Activated CD4-positive, alpha-beta T cell treated with anti-CD3 and anti-CD28 coated beads for 36 hours (primary cell): ENCODE measurements at regions of chr5 and their contacts with region 1.

Region 1: DNA sequence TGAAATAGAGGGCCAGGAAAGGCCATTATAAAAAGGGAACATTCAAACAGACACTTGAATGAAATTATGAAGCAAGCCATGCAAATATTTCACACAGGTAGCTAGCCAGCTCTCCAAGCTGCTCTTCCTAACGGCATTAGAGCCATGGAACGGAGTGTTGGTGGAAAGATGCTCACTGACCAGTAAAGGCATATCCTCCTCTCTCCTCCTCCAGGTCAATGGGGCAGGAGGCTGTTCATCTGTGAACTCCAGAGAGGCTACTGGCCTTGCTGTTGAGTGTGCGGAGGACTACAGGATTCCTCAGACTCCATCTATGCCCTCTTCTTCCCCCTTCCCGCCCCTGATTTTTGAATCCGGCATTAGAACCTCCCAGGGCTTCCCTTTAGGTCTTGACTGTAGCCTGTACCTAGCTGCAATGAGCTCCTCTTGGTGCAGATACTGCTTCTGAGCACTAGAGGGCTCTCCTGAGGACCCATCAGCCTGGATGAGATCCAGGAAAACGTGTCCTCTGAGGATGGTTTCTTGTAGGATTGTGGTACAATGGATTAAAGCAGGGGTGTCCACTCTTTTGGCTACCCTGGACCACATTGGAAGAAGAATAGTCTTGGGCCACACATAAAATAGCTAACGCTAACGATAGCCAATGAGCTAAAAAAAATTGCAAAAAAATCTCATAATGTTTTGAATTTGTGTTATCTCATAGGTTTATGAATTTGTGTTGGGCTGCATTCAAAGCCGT is 162.2 kb downstream of the SREK1 start:
- DNase-seq: peak; percentile 45
- ATAC-seq: peak; percentile 73
- H3K4me3 Mint-ChIP-seq: no peak overlapping the region
- H3K27ac Mint-ChIP-seq: no peak overlapping the region
- H3K4me1 Mint-ChIP-seq: peaks cover 2% of the 10 kb centered on the region
- H3K27me3 Mint-ChIP-seq: peaks cover 8% of the 10 kb centered on the region

Region 2: GRCh38 chr5:66324357-66324756 is 18.1 kb after region 1 on chr5:
- CTCF ChIA-PET with region 1: interaction called, 39 read pairs
- POLR2A ChIA-PET with region 1: no interaction called
- intact Hi-C with region 1: no loop called
- DNase-seq: no peak
- ATAC-seq: no peak
- H3K4me3 Mint-ChIP-seq: no peak overlapping the region
- H3K27ac Mint-ChIP-seq: no peak overlapping the region
- H3K4me1 Mint-ChIP-seq: peaks cover 11% of the 10 kb centered on the region
- H3K27me3 Mint-ChIP-seq: peaks cover 3% of the 10 kb centered on the region

Region 3: DNA sequence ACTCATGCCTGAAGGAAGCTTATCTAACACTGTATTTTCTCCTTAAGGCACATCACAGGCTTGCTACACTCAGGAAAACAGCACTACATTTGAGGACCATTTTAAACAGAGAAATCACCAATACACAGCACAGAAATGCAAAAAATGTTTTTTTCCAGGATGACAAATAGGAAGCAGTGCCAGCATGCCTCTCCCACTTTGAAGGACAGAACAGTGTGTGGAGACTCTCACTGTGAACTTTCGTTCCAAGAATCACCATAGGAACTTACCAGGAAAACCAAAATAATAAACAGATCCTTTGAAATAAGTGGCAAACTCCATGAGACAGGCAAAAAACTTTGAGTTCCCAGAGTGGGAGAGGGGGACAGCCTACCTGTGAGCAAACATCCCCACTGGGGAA is 72.1 kb after region 1 on chr5:
- CTCF ChIA-PET with region 1: interaction called, 4 read pairs
- POLR2A ChIA-PET with region 1: no interaction called
- intact Hi-C with region 1: loop called in 1 of 2 experiments (anchors 5 kb)
- DNase-seq: no peak
- ATAC-seq: no peak
- H3K4me3 Mint-ChIP-seq: no peak overlapping the region
- H3K27ac Mint-ChIP-seq: no peak overlapping the region
- H3K4me1 Mint-ChIP-seq: no peaks in the 10 kb centered on the region
- H3K27me3 Mint-ChIP-seq: peaks cover 8% of the 10 kb centered on the region

Region 4: DNA sequence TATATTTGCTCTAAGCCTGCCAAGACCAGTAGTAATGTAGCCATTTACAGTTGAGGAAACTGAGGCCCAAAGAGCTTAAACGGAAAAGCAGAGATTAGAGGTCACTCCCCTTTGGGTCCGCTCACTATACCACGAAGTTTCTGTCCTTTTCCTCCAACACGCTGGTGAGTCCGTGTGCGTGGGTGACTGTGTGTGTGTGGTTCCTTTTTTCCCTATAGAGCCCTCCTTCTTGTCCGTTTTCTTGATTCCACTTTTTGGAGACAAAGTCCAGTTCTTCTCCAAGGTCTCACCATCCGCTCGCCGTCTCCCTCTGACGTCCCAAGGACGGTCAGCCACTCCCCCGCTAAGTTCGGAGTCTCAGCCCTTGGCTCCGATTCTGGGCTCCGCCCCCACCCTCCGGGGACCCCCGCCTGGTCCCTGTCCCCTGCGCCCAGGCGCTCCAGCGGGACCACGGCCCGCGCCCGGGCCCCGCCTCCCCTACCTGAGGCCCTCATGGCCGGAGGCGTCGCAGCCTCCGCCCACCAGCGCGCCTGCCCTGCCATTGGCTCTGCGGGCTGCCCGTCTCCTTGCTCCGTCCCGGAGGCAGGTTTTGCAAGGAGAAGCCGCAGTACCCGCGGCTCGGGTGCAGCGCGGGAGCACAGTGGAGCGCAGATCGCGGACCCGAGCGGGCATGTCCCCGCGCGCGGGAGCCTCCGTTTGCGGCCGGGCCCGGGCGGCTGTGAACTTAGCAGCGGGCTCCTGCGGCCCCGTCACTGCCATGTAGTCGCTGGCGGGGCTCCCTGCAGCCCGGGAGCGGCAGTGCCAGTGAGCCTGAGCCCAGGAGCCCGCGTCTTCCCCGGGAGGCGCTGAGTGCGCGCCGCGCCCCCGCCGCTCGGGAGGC is 289.7 kb after region 1 on chr5 and contains the start of gene MAST4:
- CTCF ChIA-PET with region 1: interaction called, 4 read pairs
- POLR2A ChIA-PET with region 1: no interaction called
- intact Hi-C with region 1: loop called in 1 of 2 experiments (anchors 5 kb)
- DNase-seq: peak; percentile 86
- ATAC-seq: peak; percentile 97
- H3K4me3 Mint-ChIP-seq: peak within 1 kb of the TSS; percentile 69
- H3K27ac Mint-ChIP-seq: no peak within 1 kb of the TSS
- H3K4me1 Mint-ChIP-seq: peaks cover 16% of the 10 kb centered on the region
- H3K27me3 Mint-ChIP-seq: peaks cover 49% of the 10 kb centered on the region
- total RNA-seq, gene MAST4: 19.2 to 26.7 TPM

Region 5: GRCh38 chr5:66764982-66765381 is 458.7 kb after region 1 on chr5:
- CTCF ChIA-PET with region 1: interaction called, 26 read pairs
- POLR2A ChIA-PET with region 1: no interaction called
- intact Hi-C with region 1: no loop called
- DNase-seq: no peak
- ATAC-seq: no peak
- H3K4me3 Mint-ChIP-seq: no peak overlapping the region
- H3K27ac Mint-ChIP-seq: no peak overlapping the region
- H3K4me1 Mint-ChIP-seq: no peaks in the 10 kb centered on the region
- H3K27me3 Mint-ChIP-seq: peaks cover 2% of the 10 kb centered on the region

Region 6: GRCh38 chr5:67209142-67209771 is 903.0 kb after region 1 on chr5:
- CTCF ChIA-PET with region 1: no interaction called
- POLR2A ChIA-PET with region 1: no interaction called
- intact Hi-C with region 1: loop called in 1 of 2 experiments (anchors 5 kb)
- DNase-seq: peak; percentile 71
- ATAC-seq: peak; percentile 39
- H3K4me3 Mint-ChIP-seq: no peak overlapping the region
- H3K27ac Mint-ChIP-seq: peak overlapping the region; percentile 76
- H3K4me1 Mint-ChIP-seq: peaks cover 56% of the 10 kb centered on the region
- H3K27me3 Mint-ChIP-seq: no peaks in the 10 kb centered on the region